Cardiac septum (tissue), 1 donor: ENCODE measurements at regions of chr13 and their contacts with region 1.

Region 1: GRCh38 chr13:113951246-113951999 is 22.5 kb downstream of the C13orf46 start:
- DNase-seq: peak; percentile 92

Region 2: DNA sequence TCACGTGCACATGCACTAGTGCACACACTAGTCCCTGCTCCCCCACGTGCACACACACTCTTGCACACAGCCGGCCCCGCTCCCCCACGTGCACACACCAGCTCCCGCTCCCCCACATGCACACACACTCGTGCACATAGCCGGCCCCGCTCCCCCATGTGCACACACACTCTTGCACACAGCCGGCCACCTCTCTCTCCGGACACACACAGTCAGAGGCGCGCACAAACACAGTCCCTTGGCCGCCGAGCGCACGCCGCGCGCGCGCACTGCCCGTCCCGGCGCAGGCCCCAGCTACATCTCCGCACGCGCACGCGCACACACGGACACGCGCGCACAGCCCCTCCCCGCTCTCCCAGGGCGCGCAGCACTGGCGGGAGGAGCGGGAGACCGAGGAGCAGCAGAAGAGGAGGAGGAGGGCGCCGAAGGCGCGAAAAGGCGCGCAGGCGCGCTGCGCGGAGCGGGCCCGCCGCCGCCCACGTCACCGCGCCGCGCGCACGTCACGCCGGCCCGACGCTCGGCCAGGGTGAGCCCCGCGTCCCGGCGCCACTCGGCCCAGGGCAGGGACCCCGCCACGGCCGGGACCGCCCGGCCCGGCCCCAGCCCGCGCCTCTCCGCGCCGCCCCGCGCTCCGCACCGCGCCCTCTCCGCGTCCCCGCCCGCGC is 367.1 kb before region 1 on chr13 and contains the start of gene TFDP1:
- intact Hi-C with region 1: no loop called
- DNase-seq: peak; percentile 86
- total RNA-seq, gene TFDP1: 38.8 TPM

Region 3: DNA sequence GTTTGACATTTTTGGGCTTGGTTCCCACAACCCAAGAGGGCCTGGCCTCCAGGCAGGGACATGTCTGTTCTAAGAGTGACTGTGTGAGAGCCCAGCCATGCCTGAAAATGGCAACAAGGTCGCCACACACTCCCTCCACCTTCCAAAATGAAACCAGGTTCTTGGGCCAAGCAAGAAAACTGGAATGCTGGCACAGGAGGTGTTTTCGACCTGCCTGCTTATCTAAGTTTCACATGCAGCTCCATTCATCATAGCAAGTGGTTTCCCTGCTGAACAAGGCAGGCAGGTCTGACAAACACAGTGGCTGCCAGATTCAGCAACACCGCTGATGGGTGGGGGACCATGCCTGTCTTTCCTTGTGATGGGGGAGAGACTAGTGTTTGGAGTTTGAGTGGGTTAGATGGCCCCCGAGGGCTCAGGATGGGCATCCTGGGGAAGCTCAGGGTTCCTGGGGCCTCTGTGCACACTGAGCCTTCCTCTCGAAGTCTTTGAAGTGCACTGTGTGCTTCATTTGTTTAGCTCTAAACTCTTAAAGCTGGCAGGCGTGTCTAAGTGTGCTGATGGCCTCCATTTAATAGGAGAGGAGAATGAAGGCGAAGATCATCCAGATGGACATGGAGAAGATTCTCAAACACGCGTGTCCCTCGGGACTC is 69.7 kb before region 1 on chr13:
- intact Hi-C with region 1: no loop called
- DNase-seq: no peak

Region 4: GRCh38 chr13:113935001-113935844 is 16.2 kb before region 1 on chr13:
- intact Hi-C with region 1: no loop called
- DNase-seq: peak; percentile 72

Region 5: GRCh38 chr13:114143806-114144605 is 192.6 kb after region 1 on chr13:
- intact Hi-C with region 1: no loop called
- DNase-seq: peak; percentile 70

Region 6: DNA sequence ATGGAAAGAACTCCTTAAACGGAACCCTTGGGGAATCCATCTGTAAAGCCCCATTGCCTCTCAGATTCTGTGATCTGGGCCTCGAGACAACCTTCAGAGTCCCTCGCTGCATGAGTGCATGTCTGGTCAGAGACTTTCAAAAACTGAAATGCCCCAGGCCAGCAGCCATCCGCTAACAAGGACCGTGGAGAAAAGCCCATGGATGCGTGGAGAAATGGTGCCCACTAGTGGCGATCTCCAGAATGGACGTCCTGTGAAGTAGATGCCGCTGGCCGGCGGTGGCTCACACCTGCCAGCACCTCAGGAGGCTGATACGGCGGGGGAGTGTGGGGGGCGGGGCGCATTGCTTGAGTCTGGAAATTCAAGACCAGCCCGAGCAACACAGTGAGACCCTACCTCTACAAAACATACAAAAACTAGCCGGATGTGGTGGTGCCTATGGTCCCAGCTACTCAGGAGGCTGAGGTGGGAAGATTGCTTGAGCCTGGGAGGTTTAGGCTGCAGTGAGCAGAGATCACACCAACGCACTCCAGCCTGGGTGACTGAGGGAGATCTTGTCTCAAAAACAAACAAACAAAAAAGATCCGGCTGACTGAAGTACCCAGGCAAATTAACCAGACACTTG is 275.4 kb after region 1 on chr13:
- intact Hi-C with region 1: loop called (anchors 1 kb)
- DNase-seq: peak; percentile 92